AG04450 (cell line): ENCODE measurements at regions of chr6 and their contacts with region 1.

Region 1: DNA sequence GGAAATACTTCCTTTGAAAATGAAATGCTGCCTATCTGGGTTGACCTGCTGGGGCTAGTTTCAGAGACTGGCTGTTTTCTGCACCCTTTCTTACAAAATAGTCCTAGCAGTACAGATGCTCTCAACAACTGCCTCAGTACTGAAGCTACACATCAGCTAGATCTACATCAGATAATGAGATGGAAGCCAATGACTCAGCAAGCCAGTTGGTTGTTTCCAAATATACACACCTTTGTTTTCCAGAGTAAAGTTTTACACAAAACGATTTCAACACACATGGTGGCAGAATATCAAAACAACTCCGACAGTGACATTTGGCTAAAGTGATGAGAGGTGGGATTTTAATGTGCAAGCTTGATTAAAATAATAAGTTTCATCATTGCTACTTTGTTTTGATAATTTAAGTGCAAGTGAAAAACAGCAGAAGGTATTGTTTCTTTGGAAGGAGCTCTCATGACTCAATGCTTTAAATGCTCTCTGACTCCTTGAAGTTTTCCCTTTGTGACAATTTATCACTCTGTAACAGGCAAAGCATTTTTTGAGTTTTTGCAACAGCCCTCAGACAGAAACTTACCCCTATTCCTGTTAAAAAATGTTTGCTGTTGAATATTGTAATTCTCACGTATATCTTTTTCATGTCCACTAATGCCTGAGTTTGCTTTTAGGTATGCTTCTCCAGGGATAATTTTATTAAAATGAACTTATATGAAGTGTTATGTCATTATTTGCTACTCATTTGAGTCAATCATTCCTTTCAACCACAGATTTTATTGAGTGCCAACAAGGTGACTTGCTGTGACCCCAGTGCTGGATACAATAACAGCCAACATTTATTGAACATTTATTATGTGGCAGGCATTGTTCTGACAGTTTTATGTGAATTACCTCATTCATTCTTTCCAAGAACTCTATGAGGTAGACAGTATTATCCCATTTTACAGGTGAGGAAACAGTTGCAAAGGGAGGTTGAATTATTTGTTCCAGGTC is 882.0 kb downstream of the TFAP2A start:
- DNase-seq: no peak
- H3K4me3 ChIP-seq: no peak overlapping the region
- H3K27ac ChIP-seq: no peak overlapping the region
- H3K27me3 ChIP-seq: no peaks in the 10 kb centered on the region
- CTCF ChIP-seq: no peak

Region 2: GRCh38 chr6:9360881-9361280 is 172.0 kb before region 1 on chr6:
- CTCF ChIA-PET with region 1: no interaction called
- POLR2A ChIA-PET with region 1: no interaction called
- DNase-seq: no peak
- H3K4me3 ChIP-seq: no peak overlapping the region
- H3K27ac ChIP-seq: no peak overlapping the region
- H3K27me3 ChIP-seq: no peaks in the 10 kb centered on the region
- CTCF ChIP-seq: no peak

Region 3: GRCh38 chr6:9554806-9555205 is 21.9 kb after region 1 on chr6:
- CTCF ChIA-PET with region 1: interaction called, 10 read pairs
- POLR2A ChIA-PET with region 1: no interaction called
- DNase-seq: no peak
- H3K4me3 ChIP-seq: no peak overlapping the region
- H3K27ac ChIP-seq: no peak overlapping the region
- H3K27me3 ChIP-seq: no peaks in the 10 kb centered on the region
- CTCF ChIP-seq: no peak